ENCODE measurements at regions of chr16 and their contacts with region 1.

Region 1: GRCh38 chr16:30984669-30985400 is at the start of gene HSD3B7:
- DNase-seq: peak; percentile 90 to 93 (median 91)
- ATAC-seq: peak; percentile 90
- H3K4me3 ChIP-seq: peak within 1 kb of the TSS in 1 of 2 donors; percentile 30
- H3K27ac ChIP-seq: peak within 1 kb of the TSS; percentile 77 to 93 (median 91)
- H3K4me1 ChIP-seq: peaks cover 17% of the 10 kb centered on the region
- H3K27me3 ChIP-seq: no peaks in the 10 kb centered on the region
- CTCF ChIP-seq: peak; percentile 83 to 96 (median 90)
- POLR2A ChIP-seq: peak in 2 of 3 donors; percentile 66 to 74
- total RNA-seq, gene HSD3B7: 20.5 to 21.4 TPM

Region 2: DNA sequence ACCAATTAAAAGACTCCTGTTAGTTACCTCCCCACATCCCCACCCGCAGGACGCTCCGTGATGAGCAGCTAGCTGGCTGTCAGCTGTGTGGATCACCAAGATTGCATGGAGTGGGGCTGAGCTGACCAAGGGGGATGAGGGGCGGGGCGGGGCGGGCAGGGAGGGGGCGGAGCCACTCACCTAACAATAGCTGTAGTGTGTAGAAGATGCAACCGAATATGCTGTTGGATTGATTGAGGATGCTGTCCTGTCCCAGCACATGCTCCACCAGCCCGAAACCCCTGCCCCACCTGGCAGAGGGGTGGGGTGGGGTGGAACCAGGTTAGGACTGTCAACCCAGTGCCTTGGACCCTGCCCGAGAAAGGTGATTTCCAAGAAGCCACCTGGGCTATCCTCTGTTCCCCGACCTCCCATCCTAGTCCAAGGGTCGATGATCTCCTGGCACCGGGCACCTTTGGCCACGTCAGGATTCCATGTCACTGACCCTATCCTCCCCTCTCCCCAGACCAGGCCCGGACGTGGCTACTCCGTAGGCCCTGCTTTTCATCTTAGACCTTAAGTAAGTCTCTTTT is 108.4 kb after region 1 on chr16:
- intact Hi-C with region 1: no loop called
- DNase-seq: no peak
- ATAC-seq: no peak
- H3K4me3 ChIP-seq: no peak overlapping the region
- H3K27ac ChIP-seq: no peak overlapping the region
- H3K4me1 ChIP-seq: peaks cover 24% of the 10 kb centered on the region
- H3K27me3 ChIP-seq: no peaks in the 10 kb centered on the region
- CTCF ChIP-seq: no peak
- POLR2A ChIP-seq: no peak

Region 3: DNA sequence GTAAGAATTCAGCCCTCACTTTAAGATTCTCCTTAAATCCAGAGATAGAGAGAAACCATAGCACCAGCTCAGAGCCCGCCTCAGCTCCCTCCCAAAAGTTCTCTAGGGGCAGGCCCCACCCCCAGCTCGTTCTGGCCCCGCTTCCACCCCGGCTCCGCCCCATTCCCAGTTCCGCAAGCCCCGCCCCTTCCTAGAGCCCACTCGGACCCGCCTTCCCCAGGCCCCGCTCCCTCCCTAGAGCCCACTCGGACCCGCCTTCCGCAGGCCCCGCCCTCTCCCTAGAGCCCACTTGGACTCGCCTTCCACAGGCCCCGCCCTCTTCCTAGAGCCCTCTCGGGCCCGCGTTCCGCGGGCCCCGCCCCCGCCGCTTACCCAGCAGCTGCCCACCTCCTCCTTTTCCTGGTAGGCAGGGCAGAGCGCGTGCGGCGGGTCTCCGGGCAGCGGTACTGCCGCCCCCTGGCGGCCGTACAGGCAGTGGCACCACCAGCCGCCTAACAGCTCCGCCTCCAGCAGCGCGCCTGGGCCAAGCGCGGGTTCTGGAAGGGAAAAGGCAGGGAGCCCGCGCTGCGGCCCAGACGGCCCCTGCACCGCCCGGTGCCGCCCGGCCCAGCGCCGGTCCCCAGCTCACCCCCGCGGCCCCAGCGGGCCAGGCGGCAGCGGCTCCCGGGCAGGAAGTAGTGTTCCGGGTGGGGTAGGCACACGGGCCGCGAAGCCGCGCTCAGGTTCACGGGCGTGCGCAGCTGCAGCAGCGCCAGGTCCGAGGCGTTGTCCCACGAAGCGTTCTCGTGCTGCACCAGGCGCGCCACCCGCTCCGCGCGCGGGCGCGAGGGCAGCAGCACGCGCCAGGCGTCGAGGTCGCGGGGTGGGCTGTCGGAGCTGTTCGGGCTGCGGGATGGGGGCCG is 157.5 kb after region 1 on chr16:
- intact Hi-C with region 1: loop called (anchors 10 kb)
- DNase-seq: peak; percentile 99 to 100 (median 100)
- ATAC-seq: peak; percentile 88
- H3K4me3 ChIP-seq: no peak overlapping the region
- H3K27ac ChIP-seq: peak overlapping the region; percentile 83 to 92 (median 92)
- H3K4me1 ChIP-seq: peaks cover 48% of the 10 kb centered on the region
- H3K27me3 ChIP-seq: no peaks in the 10 kb centered on the region
- CTCF ChIP-seq: peak; percentile 95 to 100 (median 97)
- POLR2A ChIP-seq: peak in 2 of 3 donors; percentile 42 to 62

Region 4: DNA sequence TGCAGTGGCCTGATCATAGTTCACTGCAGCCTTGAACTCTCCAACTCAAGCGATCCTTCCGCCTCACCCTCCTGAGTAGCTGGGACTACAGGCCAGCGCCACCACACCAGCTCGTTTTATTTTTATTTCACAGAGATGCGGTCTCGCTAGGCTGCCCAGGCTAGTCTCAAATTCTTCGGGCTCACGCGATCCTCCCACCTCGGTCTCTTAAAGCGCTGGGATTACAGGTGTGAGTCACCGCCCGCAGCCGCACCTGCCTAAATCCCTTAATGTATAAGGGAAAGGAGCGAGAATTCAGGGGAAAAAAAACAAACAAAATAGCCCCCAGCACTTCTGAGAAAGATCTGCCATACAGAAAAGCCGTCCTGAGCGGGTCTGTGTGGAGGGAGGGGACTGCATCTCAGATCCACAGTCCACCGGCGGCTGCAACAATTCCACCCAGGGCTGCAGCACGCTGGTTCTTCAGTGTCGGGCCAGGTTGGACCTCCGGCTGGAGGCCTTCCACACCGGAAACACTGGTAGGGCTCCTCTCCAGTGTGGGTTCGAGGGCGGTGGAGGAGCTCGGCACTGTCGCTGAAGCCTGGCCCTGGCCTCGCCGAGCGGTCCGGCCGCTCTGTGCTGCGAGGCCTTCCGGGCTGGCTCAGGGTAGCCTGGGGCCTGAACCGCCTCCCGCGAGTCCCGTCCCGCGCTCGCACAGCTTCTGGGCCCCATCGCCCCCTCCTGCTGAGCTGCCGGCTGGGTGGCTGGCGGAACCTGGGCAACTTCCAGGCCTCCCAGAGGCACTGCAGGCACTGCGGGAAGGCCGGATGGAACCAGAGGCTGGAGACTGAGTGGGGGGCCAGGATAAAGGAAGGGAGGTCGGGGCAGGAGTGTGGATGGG is 450.7 kb after region 1 on chr16:
- intact Hi-C with region 1: loop called (anchors 5 kb)
- DNase-seq: no peak
- ATAC-seq: no peak
- H3K4me3 ChIP-seq: no peak overlapping the region
- H3K27ac ChIP-seq: no peak overlapping the region
- H3K4me1 ChIP-seq: no peaks in the 10 kb centered on the region
- H3K27me3 ChIP-seq: no peaks in the 10 kb centered on the region
- CTCF ChIP-seq: no peak
- POLR2A ChIP-seq: no peak

Region 5: GRCh38 chr16:31868691-31869167 is 883.9 kb after region 1 on chr16:
- intact Hi-C with region 1: loop called (anchors 10 kb)
- DNase-seq: peak; percentile 85 to 92 (median 87)
- ATAC-seq: peak; percentile 65
- H3K4me3 ChIP-seq: no peak overlapping the region
- H3K27ac ChIP-seq: peak overlapping the region in 2 of 4 donors; percentile 25 to 80
- H3K4me1 ChIP-seq: peaks cover 16% of the 10 kb centered on the region
- H3K27me3 ChIP-seq: no peaks in the 10 kb centered on the region
- CTCF ChIP-seq: peak; percentile 44 to 85 (median 81)
- POLR2A ChIP-seq: no peak